Sigmoid colon (tissue), 7 donors: ENCODE measurements at regions of chr22 and their contacts with region 1.

Region 1: GRCh38 chr22:45163451-45164269 is at the start of gene NUP50:
- DNase-seq: peak; percentile 97
- H3K4me3 ChIP-seq: peak within 1 kb of the TSS; percentile 66 to 96 (median 88)
- H3K27ac ChIP-seq: peak within 1 kb of the TSS; percentile 90 to 94 (median 94)
- H3K4me1 ChIP-seq: peaks cover 0 to 39% (median 24%) of the 10 kb centered on the region in 4 donors
- H3K27me3 ChIP-seq: no peaks in the 10 kb centered on the region
- CTCF ChIP-seq: no peak
- EP300 ChIP-seq: peak in 1 of 4 donors; percentile 54
- POLR2A ChIP-seq: peak; percentile 61 to 66
- total RNA-seq, gene NUP50: 23.2 to 28.5 (median 26.8) TPM

Region 2: DNA sequence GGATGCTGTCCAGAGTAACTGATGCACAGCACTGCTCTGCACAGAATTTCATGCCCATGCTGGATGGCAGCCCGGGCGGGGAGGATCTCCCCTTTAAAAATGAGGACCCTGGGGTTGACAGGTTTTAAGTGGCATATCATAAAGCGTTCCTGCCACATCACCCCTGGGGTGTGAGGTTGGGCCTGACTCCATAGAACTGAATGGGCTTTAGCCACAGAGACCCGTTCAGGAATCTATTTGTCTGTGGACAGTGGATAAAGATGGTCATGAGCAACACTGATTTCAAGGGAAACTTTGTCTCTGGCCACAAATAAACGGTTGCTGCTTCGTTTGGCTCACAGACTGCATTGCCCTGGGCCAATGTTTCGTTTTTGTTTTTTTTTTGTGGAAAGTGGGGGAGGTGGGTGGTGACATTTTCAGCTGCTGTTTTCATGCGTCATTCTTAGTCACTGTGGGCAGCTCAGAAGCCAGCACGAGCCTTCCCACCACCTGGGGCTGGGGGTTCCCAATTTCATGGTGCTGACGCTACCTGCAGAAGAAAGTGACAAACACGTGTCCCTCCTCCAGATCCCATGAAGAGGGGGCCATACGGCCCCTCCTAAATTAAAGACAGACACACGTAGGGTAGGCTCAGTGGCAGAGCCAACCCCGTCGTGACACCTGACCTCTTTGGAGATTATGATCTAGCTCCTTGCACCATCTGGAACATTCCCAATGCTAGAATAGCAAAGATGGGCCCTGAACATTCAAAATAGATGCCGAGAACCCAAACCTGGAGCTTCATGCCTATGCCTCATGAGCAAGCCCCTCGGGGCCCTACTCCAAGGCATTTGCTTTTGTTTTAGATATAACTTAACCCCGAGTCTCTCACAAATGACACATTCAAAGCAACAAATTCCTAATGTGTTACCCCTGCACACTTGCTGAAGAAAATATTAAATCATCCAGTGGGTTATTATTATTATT is 99.1 kb before region 1 on chr22:
- intact Hi-C with region 1: no loop called
- DNase-seq: no peak
- H3K4me3 ChIP-seq: no peak overlapping the region
- H3K27ac ChIP-seq: no peak overlapping the region
- H3K4me1 ChIP-seq: no peaks in the 10 kb centered on the region
- H3K27me3 ChIP-seq: peaks cover 0 to 12% (median 0%) of the 10 kb centered on the region in 3 donors
- CTCF ChIP-seq: no peak
- EP300 ChIP-seq: no peak
- POLR2A ChIP-seq: no peak

Region 3: GRCh38 chr22:45201678-45202332 is 38.1 kb after region 1 on chr22:
- intact Hi-C with region 1: no loop called
- DNase-seq: peak; percentile 58
- H3K4me3 ChIP-seq: no peak overlapping the region
- H3K27ac ChIP-seq: peak overlapping the region in 3 of 4 donors; percentile 52 to 68 (median 67)
- H3K4me1 ChIP-seq: peaks cover 0 to 26% (median 17%) of the 10 kb centered on the region in 4 donors
- H3K27me3 ChIP-seq: no peaks in the 10 kb centered on the region
- CTCF ChIP-seq: no peak
- EP300 ChIP-seq: no peak
- POLR2A ChIP-seq: no peak

Region 4: GRCh38 chr22:45212306-45212709 is 48.6 kb after region 1 on chr22:
- intact Hi-C with region 1: loop called (anchors 5 kb)
- DNase-seq: peak; percentile 94
- H3K4me3 ChIP-seq: peak overlapping the region; percentile 21 to 45 (median 40)
- H3K27ac ChIP-seq: peak overlapping the region; percentile 67 to 89 (median 78)
- H3K4me1 ChIP-seq: peaks cover 0 to 62% (median 53%) of the 10 kb centered on the region in 4 donors
- H3K27me3 ChIP-seq: no peaks in the 10 kb centered on the region
- CTCF ChIP-seq: peak in 2 of 4 experiments; percentile 14 to 20
- EP300 ChIP-seq: no peak
- POLR2A ChIP-seq: no peak

Region 5: GRCh38 chr22:45240810-45241631 is 77.4 kb after region 1 on chr22 and contains the start of gene KIAA0930:
- intact Hi-C with region 1: loop called (anchors 2 kb)
- DNase-seq: peak; percentile 93
- H3K4me3 ChIP-seq: peak within 1 kb of the TSS; percentile 43 to 74 (median 68)
- H3K27ac ChIP-seq: peak within 1 kb of the TSS; percentile 75 to 77 (median 76)
- H3K4me1 ChIP-seq: peaks cover 0 to 32% (median 26%) of the 10 kb centered on the region in 4 donors
- H3K27me3 ChIP-seq: no peaks in the 10 kb centered on the region
- CTCF ChIP-seq: no peak
- EP300 ChIP-seq: no peak
- POLR2A ChIP-seq: no peak
- total RNA-seq, gene KIAA0930: 25.7 to 56.5 (median 30.7) TPM

Region 6: DNA sequence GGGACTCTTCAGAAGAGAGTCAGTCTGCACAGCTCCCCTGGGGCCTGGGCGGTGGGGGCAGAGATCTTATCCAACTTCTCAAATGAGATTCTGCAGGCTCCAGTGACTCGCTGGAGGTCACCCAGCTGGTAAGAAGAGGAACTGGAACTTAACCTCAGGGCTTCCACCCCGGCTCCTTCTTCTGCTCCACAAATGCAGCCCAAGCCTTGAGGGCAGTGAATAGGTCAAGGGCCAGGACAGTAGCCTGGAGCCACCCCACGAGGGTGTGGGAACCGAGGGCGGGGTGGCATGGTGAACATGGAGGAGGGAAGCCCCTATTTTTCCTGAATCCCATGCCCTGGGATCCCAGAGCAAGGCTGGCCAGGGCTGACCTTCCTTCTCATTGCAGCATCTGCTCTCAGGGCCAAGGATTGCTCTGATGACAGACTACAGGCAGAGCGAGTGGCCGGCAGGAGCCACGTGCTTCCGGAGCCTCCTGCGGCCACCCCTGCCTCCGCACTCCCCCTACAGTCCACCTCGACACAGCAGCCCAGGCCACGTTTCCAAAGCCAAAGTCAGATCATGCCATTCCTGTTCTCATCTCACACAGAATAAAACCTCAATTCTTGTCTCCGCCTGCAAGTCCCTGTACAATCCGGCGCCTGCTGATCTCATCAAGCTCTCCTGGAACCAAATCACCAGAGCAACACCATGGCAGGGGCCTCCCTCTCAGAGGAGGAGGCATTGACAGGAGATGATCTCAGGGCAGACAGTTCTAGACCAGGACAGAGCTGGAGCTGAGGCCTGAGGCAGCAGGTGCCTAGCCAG is 100.0 kb after region 1 on chr22:
- intact Hi-C with region 1: loop called (anchors 5 kb)
- DNase-seq: peak; percentile 93
- H3K4me3 ChIP-seq: no peak overlapping the region
- H3K27ac ChIP-seq: peak overlapping the region in 3 of 4 donors; percentile 21 to 68 (median 34)
- H3K4me1 ChIP-seq: peaks cover 0 to 23% (median 18%) of the 10 kb centered on the region in 4 donors
- H3K27me3 ChIP-seq: no peaks in the 10 kb centered on the region
- CTCF ChIP-seq: peak; percentile 46 to 81 (median 66)
- EP300 ChIP-seq: no peak
- POLR2A ChIP-seq: no peak